AG04449 (cell line): ENCODE measurements at regions of chr5 and their contacts with region 1.

Region 1: GRCh38 chr5:134225618-134226440 is at the start of gene PPP2CA:
- DNase-seq: peak; percentile 90
- H3K4me3 ChIP-seq: peak within 1 kb of the TSS; percentile 93
- CTCF ChIP-seq: no peak

Region 2: DNA sequence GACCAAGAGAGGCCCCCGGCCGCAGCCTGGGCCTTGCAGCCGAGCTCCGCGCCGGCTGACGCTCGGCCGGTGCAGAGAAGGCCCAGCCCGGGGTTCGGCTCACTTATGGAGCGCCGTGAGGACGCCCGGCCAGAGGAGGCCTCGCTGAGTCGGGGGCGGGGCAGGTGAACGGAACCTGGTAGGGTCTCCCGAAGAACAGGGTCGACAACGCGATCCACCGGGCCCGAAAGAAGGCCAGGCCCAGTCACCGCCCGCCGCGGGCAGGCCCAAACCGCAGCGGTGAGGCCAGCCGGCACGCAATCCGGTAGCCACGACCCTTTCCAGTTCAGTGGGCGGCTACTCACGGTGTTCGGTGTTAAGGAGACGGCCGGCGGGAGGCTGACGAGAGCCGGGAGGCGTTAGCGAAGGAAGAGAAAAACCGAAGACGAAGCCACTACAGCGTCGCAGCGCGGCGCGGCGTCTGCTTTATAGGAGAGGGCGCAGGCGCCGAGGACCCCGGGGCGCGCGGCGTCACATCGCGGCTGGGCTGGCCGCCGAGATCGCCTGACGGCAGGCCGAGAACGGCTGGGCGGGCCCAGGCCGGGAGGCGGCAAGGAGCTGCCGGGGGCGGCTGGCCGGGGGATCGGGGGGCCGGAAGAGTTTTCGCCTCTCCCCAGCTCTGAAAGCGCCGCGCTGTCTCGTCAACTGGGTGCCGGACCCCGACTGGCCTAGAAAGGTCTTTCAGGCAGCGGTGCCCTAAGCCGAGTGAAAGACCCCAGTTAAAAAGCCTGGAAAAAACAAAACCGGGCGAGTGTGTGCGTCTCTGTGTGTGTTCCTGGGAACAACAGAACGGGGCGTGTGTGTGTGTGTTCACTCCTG is 49.1 kb before region 1 on chr5 and contains the start of gene SKP1:
- CTCF ChIA-PET with region 1: interaction called, 3 read pairs
- POLR2A ChIA-PET with region 1: interaction called, 28 read pairs
- DNase-seq: no peak
- H3K4me3 ChIP-seq: peak within 1 kb of the TSS; percentile 97
- CTCF ChIP-seq: no peak

Region 3: GRCh38 chr5:134236318-134236717 is 10.5 kb after region 1 on chr5:
- CTCF ChIA-PET with region 1: interaction called, 5 read pairs
- POLR2A ChIA-PET with region 1: interaction called, 11 read pairs
- DNase-seq: no peak
- H3K4me3 ChIP-seq: no peak overlapping the region
- CTCF ChIP-seq: no peak

Region 4: GRCh38 chr5:134267366-134268018 is 41.7 kb after region 1 on chr5:
- CTCF ChIA-PET with region 1: no interaction called
- POLR2A ChIA-PET with region 1: no interaction called
- DNase-seq: no peak
- H3K4me3 ChIP-seq: no peak overlapping the region
- CTCF ChIP-seq: no peak